ENCODE measurements at regions of chr9 and their contacts with region 1.

Region 1: DNA sequence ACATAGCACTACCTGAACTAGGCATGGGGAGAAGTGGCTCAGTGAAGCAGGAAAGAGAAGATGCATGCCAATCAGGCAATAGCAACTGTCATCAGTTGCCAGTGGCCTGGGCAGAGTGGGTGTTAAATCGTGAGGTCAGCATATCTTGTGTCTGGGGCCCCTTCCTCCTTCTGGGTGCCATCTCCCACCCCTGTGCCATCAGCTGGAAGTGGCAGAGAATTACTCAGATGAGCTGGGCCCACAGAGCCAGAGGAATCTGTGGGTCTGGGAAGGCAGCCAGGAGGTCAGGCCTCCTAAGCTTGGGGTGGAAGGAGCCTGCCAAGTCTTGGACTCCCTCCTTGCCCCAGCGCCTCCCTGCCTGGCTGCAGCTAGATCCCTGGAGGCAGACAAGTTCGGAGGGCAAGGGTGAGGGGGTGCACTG is 66.5 kb downstream of the GALNT12 start:
- DNase-seq: no peak
- ATAC-seq: no peak
- H3K4me3 Mint-ChIP-seq: no peak overlapping the region
- H3K27ac Mint-ChIP-seq: no peak overlapping the region
- H3K4me1 Mint-ChIP-seq: no peaks in the 10 kb centered on the region
- H3K27me3 Mint-ChIP-seq: peaks cover 7% of the 10 kb centered on the region

Region 2: GRCh38 chr9:98833090-98833956 is 40.6 kb before region 1 on chr9:
- CTCF ChIA-PET with region 1: no interaction called
- POLR2A ChIA-PET with region 1: no interaction called
- intact Hi-C with region 1: no loop called
- DNase-seq: no peak
- ATAC-seq: no peak
- H3K4me3 Mint-ChIP-seq: no peak overlapping the region
- H3K27ac Mint-ChIP-seq: no peak overlapping the region
- H3K4me1 Mint-ChIP-seq: no peaks in the 10 kb centered on the region
- H3K27me3 Mint-ChIP-seq: no peaks in the 10 kb centered on the region

Region 3: GRCh38 chr9:98929866-98930265 is 55.9 kb after region 1 on chr9:
- CTCF ChIA-PET with region 1: no interaction called
- POLR2A ChIA-PET with region 1: no interaction called
- intact Hi-C with region 1: loop called in 1 of 2 experiments (anchors 10 kb)
- DNase-seq: no peak
- ATAC-seq: no peak
- H3K4me3 Mint-ChIP-seq: no peak overlapping the region
- H3K27ac Mint-ChIP-seq: no peak overlapping the region
- H3K4me1 Mint-ChIP-seq: no peaks in the 10 kb centered on the region
- H3K27me3 Mint-ChIP-seq: peaks cover 8% of the 10 kb centered on the region